Ovary (tissue), 10 donors: ENCODE measurements at regions of chr2 and their contacts with region 1.

Region 1: DNA sequence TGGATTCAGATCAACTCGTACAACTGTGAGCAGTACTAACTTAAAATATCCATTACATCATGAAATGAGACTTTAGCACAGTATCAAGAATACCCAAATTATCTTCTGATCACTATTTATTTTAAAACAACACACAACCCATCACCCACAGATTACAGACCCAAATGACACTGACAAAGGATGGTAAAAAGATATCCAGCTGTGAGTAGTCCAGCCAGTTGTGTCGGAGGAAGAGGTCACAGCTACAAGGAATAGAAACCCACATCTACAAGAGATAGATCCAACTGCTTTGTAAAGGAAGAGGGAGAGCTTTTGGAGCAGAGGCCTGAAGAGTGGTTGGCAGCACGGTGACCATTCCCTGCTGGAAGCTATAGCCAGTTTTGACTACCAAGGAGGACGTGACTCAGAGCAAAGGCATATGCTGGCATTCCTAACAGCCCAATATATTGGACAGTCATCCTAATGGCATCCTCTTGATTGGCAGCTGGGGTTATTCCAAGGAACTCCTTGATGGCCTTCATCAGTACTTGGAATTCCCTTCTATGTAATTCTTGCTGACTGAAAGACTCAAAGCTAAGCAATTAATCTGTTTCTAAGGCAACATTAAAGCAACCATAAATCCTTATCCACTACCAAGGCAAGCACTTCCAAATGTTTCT is 17.1 kb downstream of the SLC8A1 start:
- DNase-seq: no peak
- H3K4me3 ChIP-seq: no peak overlapping the region
- H3K27ac ChIP-seq: no peak overlapping the region
- H3K4me1 ChIP-seq: no peaks in the 10 kb centered on the region
- H3K27me3 ChIP-seq: no peaks in the 10 kb centered on the region
- CTCF ChIP-seq: no peak
- EP300 ChIP-seq: no peak
- POLR2A ChIP-seq: no peak

Region 2: GRCh38 chr2:38925982-38926381 is 1508.8 kb before region 1 on chr2:
- intact Hi-C with region 1: no loop called
- DNase-seq: no peak
- H3K4me3 ChIP-seq: no peak overlapping the region
- H3K27ac ChIP-seq: no peak overlapping the region
- H3K4me1 ChIP-seq: no peaks in the 10 kb centered on the region
- H3K27me3 ChIP-seq: no peaks in the 10 kb centered on the region
- CTCF ChIP-seq: no peak
- EP300 ChIP-seq: no peak
- POLR2A ChIP-seq: no peak

Region 3: GRCh38 chr2:41510108-41510507 is 1075.3 kb after region 1 on chr2:
- intact Hi-C with region 1: loop called in 1 of 4 experiments (anchors 5 kb)
- DNase-seq: no peak
- H3K4me3 ChIP-seq: no peak overlapping the region
- H3K27ac ChIP-seq: no peak overlapping the region
- H3K4me1 ChIP-seq: no peaks in the 10 kb centered on the region
- H3K27me3 ChIP-seq: no peaks in the 10 kb centered on the region
- CTCF ChIP-seq: no peak
- EP300 ChIP-seq: no peak
- POLR2A ChIP-seq: no peak